Transverse colon (tissue), 4 donors: ENCODE measurements at regions of chr18 and their contacts with region 1.

Region 1: GRCh38 chr18:9066817-9067306 is 35.6 kb upstream of the NDUFV2 start:
- DNase-seq: peak; percentile 69
- H3K4me3 ChIP-seq: no peak overlapping the region
- H3K27ac ChIP-seq: peak overlapping the region in 2 of 4 donors; percentile 21 to 54
- H3K4me1 ChIP-seq: peaks cover 0 to 10% (median 0%) of the 10 kb centered on the region in 4 donors
- H3K27me3 ChIP-seq: no peaks in the 10 kb centered on the region
- CTCF ChIP-seq: no peak
- EP300 ChIP-seq: no peak
- POLR2A ChIP-seq: no peak

Region 2: GRCh38 chr18:8329186-8329771 is 737.6 kb before region 1 on chr18:
- in situ Hi-C with region 1: no loop called
- intact Hi-C with region 1: no loop called
- DNase-seq: no peak
- H3K4me3 ChIP-seq: no peak overlapping the region
- H3K27ac ChIP-seq: no peak overlapping the region
- H3K4me1 ChIP-seq: peaks cover 0 to 21% (median 13%) of the 10 kb centered on the region in 4 donors
- H3K27me3 ChIP-seq: no peaks in the 10 kb centered on the region
- CTCF ChIP-seq: no peak
- EP300 ChIP-seq: no peak
- POLR2A ChIP-seq: no peak

Region 3: GRCh38 chr18:9147440-9148202 is 80.8 kb after region 1 on chr18:
- in situ Hi-C with region 1: loop called in 2 of 4 experiments (anchors 5 kb)
- intact Hi-C with region 1: loop called (anchors 2 kb)
- DNase-seq: peak; percentile 28
- H3K4me3 ChIP-seq: no peak overlapping the region
- H3K27ac ChIP-seq: peak overlapping the region; percentile 45 to 58 (median 51)
- H3K4me1 ChIP-seq: peaks cover 17 to 94% (median 43%) of the 10 kb centered on the region in 4 donors
- H3K27me3 ChIP-seq: no peaks in the 10 kb centered on the region
- CTCF ChIP-seq: peak; percentile 60 to 80 (median 67)
- EP300 ChIP-seq: no peak
- POLR2A ChIP-seq: no peak

Region 4: GRCh38 chr18:9153256-9153655 is 86.4 kb after region 1 on chr18:
- in situ Hi-C with region 1: loop called in 2 of 4 experiments (anchors 5 kb)
- intact Hi-C with region 1: loop called (anchors 2 kb)
- DNase-seq: no peak
- H3K4me3 ChIP-seq: no peak overlapping the region
- H3K27ac ChIP-seq: peak overlapping the region in 1 of 4 donors; percentile 5
- H3K4me1 ChIP-seq: peaks cover 0 to 70% (median 14%) of the 10 kb centered on the region in 4 donors
- H3K27me3 ChIP-seq: no peaks in the 10 kb centered on the region
- CTCF ChIP-seq: no peak
- EP300 ChIP-seq: no peak
- POLR2A ChIP-seq: no peak

Region 5: DNA sequence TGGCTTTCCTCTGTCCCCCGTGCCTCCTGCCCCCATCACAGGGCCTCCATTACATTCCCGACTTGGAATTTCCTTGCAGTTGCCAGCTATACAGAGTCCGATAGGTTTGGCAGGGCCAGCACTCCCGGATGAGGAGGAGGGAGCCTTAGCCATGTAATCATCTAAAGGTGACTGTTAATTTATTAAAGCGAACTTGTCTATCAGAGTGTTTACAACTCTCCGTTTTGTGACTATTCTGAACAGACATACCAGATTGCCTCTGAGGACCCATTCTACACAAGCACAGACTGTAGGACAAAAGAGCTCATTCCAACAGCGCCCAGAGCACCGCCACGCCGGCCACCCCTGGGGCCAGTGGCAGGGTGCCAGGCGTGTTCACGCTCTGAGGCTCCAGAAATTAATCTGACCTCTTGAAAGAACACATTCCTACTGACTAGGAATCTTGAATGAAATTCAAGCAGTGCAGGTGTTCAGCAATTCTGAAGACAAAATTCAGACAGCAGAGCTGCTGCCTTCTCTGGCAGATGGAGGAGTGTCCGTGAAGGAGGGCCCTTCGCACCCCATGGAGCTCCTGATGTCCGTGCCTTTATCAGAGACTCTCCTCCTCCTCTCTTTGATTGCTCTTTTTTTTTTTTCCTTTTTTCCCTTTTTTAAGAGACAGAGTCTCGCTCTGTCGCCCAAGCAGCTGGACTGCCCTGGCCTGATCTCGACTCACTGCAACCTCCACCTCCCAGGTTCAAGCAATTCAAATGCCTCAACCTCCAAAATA is 350.4 kb after region 1 on chr18:
- in situ Hi-C with region 1: no loop called
- intact Hi-C with region 1: no loop called
- DNase-seq: no peak
- H3K4me3 ChIP-seq: no peak overlapping the region
- H3K27ac ChIP-seq: peak overlapping the region in 1 of 4 donors; percentile 50
- H3K4me1 ChIP-seq: peaks cover 0 to 12% (median 7%) of the 10 kb centered on the region in 4 donors
- H3K27me3 ChIP-seq: no peaks in the 10 kb centered on the region
- CTCF ChIP-seq: no peak
- EP300 ChIP-seq: no peak
- POLR2A ChIP-seq: no peak